ENCODE measurements at regions of chr4 and their contacts with region 1.

Region 1: GRCh38 chr4:72505314-72505744 is 63.7 kb downstream of the ADAMTS3 start:
- DNase-seq: peak; percentile 27
- ATAC-seq: peak; percentile 99
- H3K4me3 Mint-ChIP-seq: no peak overlapping the region
- H3K27ac Mint-ChIP-seq: no peak overlapping the region
- H3K4me1 Mint-ChIP-seq: peaks cover 2% of the 10 kb centered on the region; the same call in 1 of the 2 replicates
- H3K27me3 Mint-ChIP-seq: no peaks in the 10 kb centered on the region
- CTCF ChIP-seq: peak; percentile 55; the same call in 1 of the 2 replicates

Region 2: GRCh38 chr4:72567821-72568675 is 62.7 kb after region 1 on chr4:
- CTCF ChIA-PET with region 1: interaction called, 16 read pairs
- POLR2A ChIA-PET with region 1: interaction called, 3 read pairs
- DNase-seq: peak; percentile 88
- ATAC-seq: peak; percentile 79
- H3K4me3 Mint-ChIP-seq: peak overlapping the region; percentile 92
- H3K27ac Mint-ChIP-seq: peak overlapping the region; percentile 88
- H3K4me1 Mint-ChIP-seq: peaks cover 44% of the 10 kb centered on the region
- H3K27me3 Mint-ChIP-seq: no peaks in the 10 kb centered on the region; the same call in 1 of the 2 replicates
- CTCF ChIP-seq: no peak